ENCODE measurements at regions of chr2 and their contacts with region 1.

Region 1: DNA sequence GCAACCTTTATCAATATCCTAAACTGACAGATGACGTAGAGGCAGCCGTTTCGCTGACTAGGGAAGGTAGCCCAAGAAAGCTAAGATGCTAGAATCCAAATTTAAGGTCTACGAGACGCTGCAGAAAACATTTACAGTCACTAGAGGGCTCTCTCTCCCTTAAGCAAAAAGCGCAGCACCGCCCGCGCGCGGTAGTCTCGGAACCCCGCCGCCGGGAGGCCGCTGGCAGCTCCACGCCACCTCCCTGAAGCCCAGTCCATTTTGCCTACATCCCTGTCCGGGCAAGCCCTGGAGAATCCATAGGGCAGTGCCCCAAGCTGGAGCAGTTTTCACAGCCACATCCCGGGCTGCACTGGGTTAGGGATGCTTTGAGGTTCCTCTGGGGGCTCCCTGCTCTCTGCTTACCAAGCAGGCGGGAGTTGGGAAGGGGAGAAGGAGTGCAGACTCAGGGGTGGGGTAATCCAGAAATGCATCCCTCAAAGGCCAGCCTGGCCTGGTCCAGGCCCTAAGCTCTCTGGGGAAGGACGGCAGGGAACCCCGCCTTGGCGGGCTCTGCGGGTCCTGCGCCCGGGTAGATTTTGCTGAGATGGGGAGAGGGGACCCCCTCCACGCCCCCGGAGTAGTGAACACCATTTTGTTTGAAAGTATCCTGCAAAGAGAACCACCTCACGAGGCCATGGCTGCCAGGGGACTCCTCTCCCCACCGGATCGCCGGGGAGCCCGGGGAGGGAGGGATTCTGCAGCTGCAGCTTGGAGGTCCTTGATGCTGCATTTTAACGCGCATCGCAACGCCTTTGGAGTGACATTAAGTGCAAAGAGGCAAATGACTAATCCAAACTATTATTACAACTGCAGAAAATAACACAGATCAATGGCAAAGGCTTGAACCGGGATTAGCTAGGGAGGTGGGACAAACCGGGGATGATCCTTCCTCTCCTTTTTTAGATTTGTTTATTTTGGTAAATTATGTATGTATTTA is 1.3 kb upstream of the DPYSL5 start:
- DNase-seq: no peak
- ATAC-seq: peak; percentile 95
- H3K4me3 ChIP-seq: no peak overlapping the region
- H3K27ac ChIP-seq: no peak overlapping the region
- H3K4me1 ChIP-seq: no peaks in the 10 kb centered on the region
- H3K27me3 ChIP-seq: peaks cover 18 to 27% of the 10 kb centered on the region in 2 experiments
- CTCF ChIP-seq: peak; percentile 77 to 90 (median 77)
- EP300 ChIP-seq: no peak
- POLR2A ChIP-seq: no peak
- RAD21 ChIP-seq: peak; percentile 71

Region 2: GRCh38 chr2:26860211-26860850 is 13.7 kb after region 1 on chr2:
- CTCF ChIA-PET with region 1: interaction called, 10 read pairs
- POLR2A ChIA-PET with region 1: no interaction called
- RAD21 ChIA-PET with region 1: interaction called, 5 read pairs
- SMC1A ChIA-PET with region 1: interaction called, 5 read pairs
- in situ Hi-C with region 1: no loop called
- intact Hi-C with region 1: no loop called
- DNase-seq: no peak
- ATAC-seq: no peak
- H3K4me3 ChIP-seq: no peak overlapping the region
- H3K27ac ChIP-seq: no peak overlapping the region
- H3K4me1 ChIP-seq: no peaks in the 10 kb centered on the region
- H3K27me3 ChIP-seq: peaks cover 1 to 3% of the 10 kb centered on the region in 2 experiments; a peak in 3 of 4 replicates
- CTCF ChIP-seq: no peak
- EP300 ChIP-seq: no peak
- POLR2A ChIP-seq: no peak
- RAD21 ChIP-seq: no peak

Region 3: DNA sequence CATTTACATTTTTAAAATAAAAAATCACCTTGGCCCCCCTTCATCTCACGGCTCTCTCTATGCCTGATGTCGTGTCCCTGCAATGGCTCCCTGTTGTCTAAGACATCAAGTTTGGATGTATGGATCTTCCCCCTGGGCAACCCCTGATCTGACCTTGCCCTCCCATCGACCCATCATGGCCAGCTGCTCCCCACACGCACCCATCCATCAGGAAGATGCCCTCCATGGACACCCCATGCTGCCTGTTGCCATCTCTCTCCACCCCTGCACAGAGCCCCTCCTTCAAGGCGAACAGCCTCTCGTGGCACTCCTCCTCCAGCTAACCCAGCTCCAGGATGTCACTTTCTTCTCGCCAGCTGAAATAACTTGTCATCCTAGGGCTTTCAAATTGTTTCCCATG is 60.8 kb after region 1 on chr2:
- CTCF ChIA-PET with region 1: interaction called, 14 read pairs
- POLR2A ChIA-PET with region 1: no interaction called
- RAD21 ChIA-PET with region 1: no interaction called
- SMC1A ChIA-PET with region 1: interaction called, 4 read pairs
- in situ Hi-C with region 1: no loop called
- intact Hi-C with region 1: no loop called
- DNase-seq: no peak
- ATAC-seq: no peak
- H3K4me3 ChIP-seq: no peak overlapping the region
- H3K27ac ChIP-seq: no peak overlapping the region
- H3K4me1 ChIP-seq: peaks cover 5% of the 10 kb centered on the region
- H3K27me3 ChIP-seq: no peaks in the 10 kb centered on the region
- CTCF ChIP-seq: no peak
- EP300 ChIP-seq: no peak
- POLR2A ChIP-seq: no peak
- RAD21 ChIP-seq: no peak

Region 4: DNA sequence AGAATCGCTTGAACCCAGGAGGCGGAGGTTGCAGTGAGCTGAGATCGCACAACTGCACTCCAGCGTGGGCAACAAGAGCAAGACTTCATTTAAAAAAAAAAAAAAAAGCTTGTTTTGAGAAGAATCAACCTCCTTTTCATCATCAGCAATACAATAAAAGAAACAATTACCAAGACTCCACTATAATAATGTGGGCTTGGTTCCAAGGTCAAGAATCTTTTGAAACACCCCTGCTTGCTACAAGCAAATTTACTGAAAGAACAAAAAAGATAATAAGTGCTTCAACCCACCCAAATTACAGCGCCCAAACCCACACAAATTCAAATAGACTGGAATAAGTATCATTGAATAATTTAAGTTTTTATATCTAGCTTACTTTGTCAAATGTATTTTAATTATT is 90.2 kb after region 1 on chr2:
- CTCF ChIA-PET with region 1: interaction called, 62 read pairs
- POLR2A ChIA-PET with region 1: no interaction called
- RAD21 ChIA-PET with region 1: interaction called, 40 read pairs
- SMC1A ChIA-PET with region 1: interaction called, 14 read pairs
- in situ Hi-C with region 1: no loop called
- intact Hi-C with region 1: loop called (anchors 1 kb)
- DNase-seq: no peak
- ATAC-seq: no peak
- H3K4me3 ChIP-seq: no peak overlapping the region
- H3K27ac ChIP-seq: no peak overlapping the region
- H3K4me1 ChIP-seq: no peaks in the 10 kb centered on the region
- H3K27me3 ChIP-seq: peaks cover 0 to 1% of the 10 kb centered on the region in 2 experiments; a peak in 3 of 4 replicates
- CTCF ChIP-seq: no peak
- EP300 ChIP-seq: no peak
- POLR2A ChIP-seq: no peak
- RAD21 ChIP-seq: no peak

Region 5: DNA sequence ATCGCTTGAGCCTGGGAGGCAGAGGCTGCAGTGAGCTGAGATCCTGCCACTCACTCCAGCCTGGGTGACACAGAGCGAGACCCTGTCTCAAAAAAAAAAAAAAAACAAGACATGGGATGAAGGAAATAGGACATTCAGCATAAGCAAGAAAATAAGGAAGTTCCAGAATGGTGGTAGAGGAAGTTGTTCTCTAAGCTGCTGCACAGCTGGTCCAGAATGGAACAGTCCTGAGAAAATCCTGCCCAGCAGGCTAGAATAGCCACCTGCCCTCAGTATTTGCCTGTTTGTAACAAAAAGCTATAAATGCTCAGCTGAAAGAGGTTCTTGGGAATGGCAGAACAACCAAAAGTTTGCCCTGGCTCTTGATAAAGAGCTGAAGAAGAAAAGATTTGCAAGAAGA is 112.7 kb after region 1 on chr2:
- CTCF ChIA-PET with region 1: interaction called, 10 read pairs
- POLR2A ChIA-PET with region 1: no interaction called
- RAD21 ChIA-PET with region 1: interaction called, 6 read pairs
- SMC1A ChIA-PET with region 1: interaction called, 3 read pairs
- in situ Hi-C with region 1: no loop called
- intact Hi-C with region 1: no loop called
- DNase-seq: no peak
- ATAC-seq: no peak
- H3K4me3 ChIP-seq: no peak overlapping the region
- H3K27ac ChIP-seq: no peak overlapping the region
- H3K4me1 ChIP-seq: no peaks in the 10 kb centered on the region
- H3K27me3 ChIP-seq: no peaks in the 10 kb centered on the region; a peak in 2 of 4 replicates
- CTCF ChIP-seq: no peak
- EP300 ChIP-seq: no peak
- POLR2A ChIP-seq: no peak
- RAD21 ChIP-seq: no peak

Measured in GM12878 (cell line).